Left cardiac atrium (tissue), 4 donors: ENCODE measurements at regions of chr10 and their contacts with region 1.

Region 1: DNA sequence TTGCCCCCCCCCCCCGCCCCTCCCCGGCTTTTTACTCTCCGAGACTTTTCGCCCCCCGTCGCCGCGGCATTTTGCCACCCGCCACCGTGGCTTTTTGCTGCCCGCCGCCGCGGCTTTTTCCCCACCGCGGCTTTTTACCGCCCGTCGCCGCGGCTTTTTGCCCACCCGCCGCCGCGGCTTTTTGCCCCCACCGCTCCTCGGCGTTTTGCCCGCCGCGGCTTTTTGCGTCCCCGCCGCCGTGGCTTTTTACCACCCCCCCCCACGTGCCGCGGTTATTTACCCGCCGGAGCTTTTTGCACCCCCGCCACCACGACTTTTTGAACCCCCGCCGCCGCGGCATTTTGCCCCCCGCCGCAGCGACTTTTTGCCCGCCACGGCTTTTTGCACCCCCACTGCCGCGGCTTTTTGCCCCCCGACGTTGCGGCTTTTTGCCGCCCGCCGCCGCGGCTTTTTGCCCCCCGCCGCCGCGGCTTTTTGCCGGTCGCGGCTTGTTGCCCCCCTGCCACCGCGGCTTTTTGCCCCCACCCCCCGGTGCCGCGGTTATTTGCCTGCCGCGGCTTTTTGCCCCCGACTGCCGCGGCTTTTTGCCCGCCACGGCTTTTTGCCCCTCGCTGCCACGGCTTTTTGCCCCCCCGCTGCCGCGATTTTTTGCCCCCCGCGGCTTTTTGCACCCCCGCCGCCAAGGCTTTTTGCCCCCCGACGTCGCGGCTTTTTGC is 461.1 kb downstream of the ZNF33B start:
- DNase-seq: no peak
- ATAC-seq: no peak

Region 2: GRCh38 chr10:42428534-42428933 is 251.3 kb after region 1 on chr10:
- intact Hi-C with region 1: loop called in 1 of 2 experiments (anchors 10 kb)
- DNase-seq: no peak
- ATAC-seq: no peak